ENCODE measurements at regions of chr11 and their contacts with region 1.

Region 1: DNA sequence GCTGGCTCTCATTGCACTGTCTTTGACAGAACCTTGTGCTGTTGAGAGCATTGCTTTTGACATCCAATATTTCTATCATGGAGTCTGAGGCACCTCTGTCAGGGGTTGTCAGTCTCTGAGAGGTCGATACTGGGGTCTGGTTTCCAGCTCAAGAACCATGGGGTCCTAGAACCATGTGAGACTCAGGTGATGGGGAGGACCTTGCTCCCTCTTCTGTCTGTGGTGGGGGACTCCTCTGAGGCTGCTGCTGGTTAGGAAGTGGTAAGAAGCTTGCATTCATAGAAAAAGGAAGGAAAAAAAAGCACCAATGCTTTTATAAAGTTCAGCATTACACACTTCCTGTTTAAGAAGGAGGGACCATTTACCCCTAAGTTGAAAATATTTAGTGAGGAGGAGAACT is 91.8 kb upstream of the CD44 start:
- DNase-seq: no peak
- ATAC-seq: peak; percentile 53
- H3K4me3 Mint-ChIP-seq: peak overlapping the region; percentile 50
- H3K27ac Mint-ChIP-seq: peak overlapping the region; percentile 93
- H3K4me1 Mint-ChIP-seq: peaks cover 80% of the 10 kb centered on the region
- H3K27me3 Mint-ChIP-seq: no peaks in the 10 kb centered on the region
- CTCF ChIP-seq: no peak

Region 2: DNA sequence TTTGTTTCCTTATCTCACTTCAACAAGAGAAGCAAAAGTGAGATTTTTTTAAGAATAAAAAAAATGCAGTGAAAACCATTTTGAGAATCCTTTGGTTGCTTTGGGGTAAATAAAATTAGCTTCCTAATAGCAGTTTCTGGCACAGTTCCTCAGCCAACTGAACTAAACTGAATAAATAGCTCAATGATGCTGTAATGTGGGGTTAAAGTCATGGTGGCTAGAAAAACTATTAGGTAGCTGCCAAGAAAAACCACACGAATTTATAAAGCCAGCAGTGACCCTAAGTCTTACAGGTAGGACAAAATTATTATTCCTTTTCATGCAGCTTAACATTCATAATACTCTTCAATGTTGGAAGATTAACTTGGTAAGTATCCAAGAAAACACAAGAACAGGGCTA is 273.4 kb before region 1 on chr11:
- CTCF ChIA-PET with region 1: no interaction called
- POLR2A ChIA-PET with region 1: no interaction called
- intact Hi-C with region 1: no loop called
- DNase-seq: no peak
- ATAC-seq: no peak
- H3K4me3 Mint-ChIP-seq: no peak overlapping the region
- H3K27ac Mint-ChIP-seq: no peak overlapping the region
- H3K4me1 Mint-ChIP-seq: no peaks in the 10 kb centered on the region
- H3K27me3 Mint-ChIP-seq: peaks cover 24% of the 10 kb centered on the region
- CTCF ChIP-seq: no peak

Region 3: DNA sequence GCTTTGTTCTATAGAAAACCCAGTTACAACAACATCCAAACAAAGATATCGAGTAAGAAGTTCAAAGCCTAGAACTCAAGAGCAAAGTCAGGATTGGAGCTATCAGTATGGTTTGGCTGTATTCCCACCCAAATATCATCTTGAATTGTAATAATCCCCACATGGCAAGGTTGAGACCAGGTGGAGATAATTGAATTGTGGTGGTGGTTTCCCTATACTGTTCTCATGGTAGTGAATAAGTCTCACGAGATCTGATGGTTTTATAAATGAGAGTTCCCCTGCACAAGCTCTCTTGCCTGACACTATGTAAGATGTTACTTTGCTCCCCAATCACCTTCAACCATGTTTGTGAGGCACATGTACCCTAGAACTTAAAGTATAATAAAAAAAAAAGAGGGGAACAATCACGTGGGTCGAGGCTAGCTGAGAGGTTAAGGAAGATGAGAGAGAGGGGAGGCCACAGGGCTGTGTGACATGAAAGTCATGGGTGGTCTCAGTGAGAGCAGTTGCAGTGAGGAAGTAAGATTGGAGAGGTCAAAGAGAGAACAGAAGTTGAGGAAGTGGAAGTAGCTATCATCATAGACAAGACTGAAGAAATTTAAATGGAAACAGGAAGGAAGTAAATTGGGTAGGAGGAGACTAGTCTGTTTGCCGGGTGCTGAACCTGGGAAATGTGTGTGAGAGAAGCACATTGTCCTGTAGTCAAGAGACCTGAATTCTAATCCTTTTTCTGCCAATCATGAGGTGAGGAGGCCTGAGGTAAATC is 11.7 kb after region 1 on chr11:
- CTCF ChIA-PET with region 1: interaction called, 3 read pairs
- POLR2A ChIA-PET with region 1: interaction called, 12 read pairs
- intact Hi-C with region 1: loop called (anchors 1 kb)
- DNase-seq: no peak
- ATAC-seq: peak; percentile 82
- H3K4me3 Mint-ChIP-seq: peak overlapping the region; percentile 17
- H3K27ac Mint-ChIP-seq: peak overlapping the region; percentile 83
- H3K4me1 Mint-ChIP-seq: peaks cover 45% of the 10 kb centered on the region
- H3K27me3 Mint-ChIP-seq: no peaks in the 10 kb centered on the region
- CTCF ChIP-seq: no peak

Region 4: DNA sequence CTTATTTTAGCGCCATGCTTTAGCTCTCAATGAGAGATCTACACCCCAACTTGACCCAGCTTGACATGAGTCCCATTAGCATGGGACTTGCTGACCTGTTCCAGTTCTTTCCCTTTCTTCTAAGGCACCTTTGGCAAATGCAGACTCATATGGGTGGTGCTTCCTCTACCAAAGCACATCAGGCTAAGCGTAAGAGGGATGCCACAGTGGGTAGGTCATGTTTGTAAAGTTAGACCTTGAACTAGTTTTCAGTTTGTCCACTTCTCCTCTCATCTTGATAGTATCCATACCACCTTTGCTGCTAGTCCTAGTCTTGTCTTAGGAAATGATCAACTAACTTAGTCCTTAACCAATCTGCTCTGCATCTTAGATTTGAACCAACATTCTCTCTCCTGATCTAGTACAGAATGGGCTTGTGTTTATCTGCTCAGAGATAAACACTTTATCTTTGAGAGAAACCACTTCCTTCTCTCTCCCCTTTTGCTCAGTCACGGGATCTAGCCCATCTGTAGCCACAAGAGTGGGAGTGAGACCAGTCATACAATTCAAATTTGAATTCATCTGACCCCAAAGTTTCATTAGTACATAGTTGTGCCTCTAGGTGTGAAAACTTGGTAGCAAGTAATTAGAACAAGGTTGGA is 19.7 kb after region 1 on chr11:
- CTCF ChIA-PET with region 1: no interaction called
- POLR2A ChIA-PET with region 1: interaction called, 12 read pairs
- intact Hi-C with region 1: no loop called
- DNase-seq: no peak
- ATAC-seq: peak; percentile 71
- H3K4me3 Mint-ChIP-seq: peak overlapping the region; percentile 24
- H3K27ac Mint-ChIP-seq: peak overlapping the region; percentile 78
- H3K4me1 Mint-ChIP-seq: peaks cover 52% of the 10 kb centered on the region
- H3K27me3 Mint-ChIP-seq: no peaks in the 10 kb centered on the region
- CTCF ChIP-seq: no peak

Measured in activated B cell treated with CpG ODN at 0.5 μM for 24 hours (primary cell).